SK-N-SH (cell line): ENCODE measurements at regions of chr7 and their contacts with region 1.

Region 1: GRCh38 chr7:149742075-149742701 is 31.2 kb downstream of the ZNF467 start:
- DNase-seq: peak; percentile 92
- H3K4me3 ChIP-seq: peak overlapping the region; percentile 45 to 56
- H3K27ac ChIP-seq: peak overlapping the region in 1 of 2 experiments; percentile 17; a peak in 2 of 4 replicates
- H3K4me1 ChIP-seq: peaks cover 0 to 11% of the 10 kb centered on the region in 2 experiments; a peak in 1 of 4 replicates
- H3K27me3 ChIP-seq: peaks cover 30% of the 10 kb centered on the region
- CTCF ChIP-seq: peak; percentile 98
- EP300 ChIP-seq: no peak
- RAD21 ChIP-seq: peak; percentile 90

Region 2: GRCh38 chr7:149524394-149524793 is 217.8 kb before region 1 on chr7:
- CTCF ChIA-PET with region 1: no interaction called
- POLR2A ChIA-PET with region 1: no interaction called
- DNase-seq: no peak
- H3K4me3 ChIP-seq: no peak overlapping the region
- H3K27ac ChIP-seq: no peak overlapping the region
- H3K4me1 ChIP-seq: no peaks in the 10 kb centered on the region
- H3K27me3 ChIP-seq: no peaks in the 10 kb centered on the region
- CTCF ChIP-seq: no peak
- EP300 ChIP-seq: no peak
- RAD21 ChIP-seq: no peak

Region 3: DNA sequence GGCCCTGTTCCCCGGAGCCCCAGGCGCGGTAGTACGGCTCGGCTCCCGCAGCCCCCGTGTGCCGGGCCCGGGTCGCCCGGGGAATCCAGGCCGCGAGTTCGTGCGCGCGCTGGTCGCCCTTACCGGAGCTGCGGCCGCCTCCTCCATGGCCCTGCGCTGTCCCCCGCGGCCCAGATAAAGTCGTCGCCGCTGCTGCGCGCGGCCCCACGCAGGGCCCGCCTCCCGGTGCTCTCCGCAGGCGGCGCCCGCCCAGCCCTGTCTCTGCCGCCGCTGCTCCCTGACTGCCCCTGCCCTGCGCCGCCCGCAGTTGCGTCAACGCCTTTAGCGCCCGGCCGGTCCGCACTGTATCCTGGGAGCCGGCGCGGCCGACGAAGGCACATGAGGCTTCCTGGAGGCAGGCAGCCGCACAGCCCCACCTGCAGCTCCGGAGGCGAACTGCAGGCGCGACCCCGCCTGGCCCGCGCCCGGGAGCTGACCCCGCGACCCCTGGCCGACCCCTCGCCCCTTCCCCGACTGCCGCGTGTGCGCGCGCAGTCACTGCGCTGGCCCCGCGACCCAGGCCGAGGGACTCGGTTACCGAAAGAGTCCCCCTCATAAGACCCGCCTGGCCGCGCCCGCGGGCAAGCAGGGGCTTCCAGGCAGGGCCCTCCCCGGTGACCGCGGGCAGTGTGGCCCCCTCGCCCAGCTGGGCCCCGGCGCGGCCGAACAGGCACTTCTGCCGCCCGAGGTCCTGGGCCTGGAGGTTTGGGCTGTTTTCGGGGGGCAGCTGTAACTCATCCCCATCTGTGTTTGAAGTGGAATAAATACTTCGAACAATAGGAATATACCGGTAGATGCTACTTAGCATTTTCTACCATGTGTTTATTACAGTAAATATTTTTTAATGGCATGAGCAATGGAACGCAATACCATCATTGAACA is 117.5 kb before region 1 on chr7:
- CTCF ChIA-PET with region 1: interaction called, 19 read pairs
- POLR2A ChIA-PET with region 1: interaction called, 3 read pairs
- DNase-seq: peak; percentile 99
- H3K4me3 ChIP-seq: peak overlapping the region; percentile 89 to 95
- H3K27ac ChIP-seq: peak overlapping the region; percentile 43 to 79
- H3K4me1 ChIP-seq: peaks cover 7 to 16% of the 10 kb centered on the region in 2 experiments; a peak in 2 of 4 replicates
- H3K27me3 ChIP-seq: peaks cover 4% of the 10 kb centered on the region; the same call in 1 of the 2 replicates
- CTCF ChIP-seq: peak; percentile 94
- EP300 ChIP-seq: peak in 1 of 2 experiments; percentile 62; a peak in 1 of 4 replicates
- RAD21 ChIP-seq: no peak

Region 4: DNA sequence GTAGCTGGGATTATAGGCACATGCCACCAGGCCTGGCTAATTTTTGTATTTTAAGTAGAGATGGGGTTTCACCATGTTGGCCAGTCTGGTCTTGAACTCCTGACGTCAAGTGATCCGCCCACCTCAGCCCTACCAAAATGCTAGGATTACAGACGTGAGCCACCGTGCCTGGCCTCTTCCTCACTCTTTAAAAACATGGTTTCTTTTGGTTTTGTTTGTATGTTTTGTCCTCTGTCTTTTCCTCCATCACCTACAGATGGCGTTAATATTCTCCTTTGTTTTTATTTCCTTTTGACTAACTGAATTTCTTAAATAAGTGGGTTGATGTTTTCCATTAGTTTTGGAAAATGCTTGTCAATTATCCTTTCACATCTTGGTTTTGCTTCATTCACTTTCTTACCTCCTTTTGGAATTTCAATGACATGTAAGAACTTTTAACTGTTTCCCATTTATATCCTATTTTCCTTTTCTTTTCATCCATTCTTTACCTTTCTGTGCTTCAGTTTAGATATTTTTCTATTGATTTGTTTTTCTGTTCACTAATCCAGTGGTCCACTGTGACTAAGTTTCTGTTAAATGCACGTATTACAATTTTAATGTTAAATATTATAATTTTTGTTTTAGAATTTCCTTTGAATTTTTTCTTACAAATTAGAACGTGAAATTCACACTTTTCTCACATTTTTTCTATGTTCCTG is 72.9 kb before region 1 on chr7:
- CTCF ChIA-PET with region 1: interaction called, 40 read pairs
- POLR2A ChIA-PET with region 1: no interaction called
- DNase-seq: no peak
- H3K4me3 ChIP-seq: 0 out of 4 replicates have a peak overlapping the region, but pooled peaks of 1 of the 2 experiments have one; percentile 2
- H3K27ac ChIP-seq: no peak overlapping the region
- H3K4me1 ChIP-seq: peaks cover 0 to 11% of the 10 kb centered on the region in 2 experiments; a peak in 2 of 4 replicates
- H3K27me3 ChIP-seq: peaks cover 19% of the 10 kb centered on the region; the same call in 1 of the 2 replicates
- CTCF ChIP-seq: peak; percentile 62
- EP300 ChIP-seq: no peak
- RAD21 ChIP-seq: peak; percentile 60

Region 5: GRCh38 chr7:149720372-149721248 is 21.6 kb before region 1 on chr7:
- CTCF ChIA-PET with region 1: interaction called, 15 read pairs
- POLR2A ChIA-PET with region 1: no interaction called
- DNase-seq: peak; percentile 78
- H3K4me3 ChIP-seq: no peak overlapping the region
- H3K27ac ChIP-seq: peak overlapping the region in 1 of 2 experiments; percentile 39; a peak in 1 of 4 replicates
- H3K4me1 ChIP-seq: peaks cover 5 to 37% of the 10 kb centered on the region in 2 experiments; a peak in 1 of 4 replicates
- H3K27me3 ChIP-seq: no peaks in the 10 kb centered on the region
- CTCF ChIP-seq: no peak
- EP300 ChIP-seq: no peak
- RAD21 ChIP-seq: no peak

Region 6: GRCh38 chr7:149764481-149765398 is 22.6 kb after region 1 on chr7:
- CTCF ChIA-PET with region 1: interaction called, 51 read pairs
- POLR2A ChIA-PET with region 1: no interaction called
- DNase-seq: peak; percentile 79
- H3K4me3 ChIP-seq: peak overlapping the region in 1 of 2 experiments; percentile 2; a peak in 1 of 4 replicates
- H3K27ac ChIP-seq: no peak overlapping the region
- H3K4me1 ChIP-seq: peaks cover 0 to 11% of the 10 kb centered on the region in 2 experiments; a peak in 1 of 4 replicates
- H3K27me3 ChIP-seq: peaks cover 91% of the 10 kb centered on the region
- CTCF ChIP-seq: peak; percentile 18
- EP300 ChIP-seq: no peak
- RAD21 ChIP-seq: no peak; the same call in 1 of the 2 replicates